GM23248 (cell line): ENCODE measurements at regions of chr19 and their contacts with region 1.

Region 1: GRCh38 chr19:13880059-13881043 is 3.4 kb downstream of the NANOS3 start:
- DNase-seq: peak; percentile 100
- H3K4me3 ChIP-seq: peak overlapping the region; percentile 56
- H3K27ac ChIP-seq: peak overlapping the region; percentile 82
- H3K4me1 ChIP-seq: peaks cover 21% of the 10 kb centered on the region
- H3K27me3 ChIP-seq: no peaks in the 10 kb centered on the region

Region 2: DNA sequence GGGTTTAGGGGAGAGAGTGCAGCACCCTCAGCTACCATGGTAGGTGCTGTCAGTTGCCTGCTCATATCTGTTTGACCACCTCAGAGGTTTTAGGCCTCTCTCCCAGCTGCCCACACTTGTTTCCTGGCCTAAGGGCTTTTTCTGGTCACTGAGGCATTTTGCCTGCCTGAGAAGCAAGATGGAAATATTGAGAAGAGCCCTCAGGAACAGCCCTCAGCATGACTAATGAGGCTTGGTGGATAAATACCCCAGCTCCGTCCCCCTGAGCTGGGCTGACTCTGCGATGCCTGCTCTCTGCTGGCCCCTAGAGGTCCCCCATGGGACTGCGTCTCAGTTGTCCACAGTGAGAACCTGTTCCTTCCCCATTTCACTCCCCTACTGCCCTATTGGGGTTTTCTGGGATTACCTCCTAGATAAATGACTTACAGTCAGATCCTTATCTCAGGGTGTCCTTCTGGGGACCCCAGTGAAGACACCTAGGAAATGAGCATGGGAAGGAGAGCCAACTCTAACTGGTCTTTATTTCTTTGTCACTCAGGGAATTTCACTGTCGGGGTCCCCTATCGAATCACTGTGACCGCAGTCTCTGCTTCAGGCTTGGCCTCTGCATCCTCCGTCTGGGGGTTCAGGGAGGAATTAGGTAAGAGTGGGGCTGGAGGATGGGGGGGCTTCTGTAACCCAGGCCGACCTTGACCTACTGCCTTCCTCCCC is 168.2 kb after region 1 on chr19:
- in situ Hi-C with region 1: loop called (anchors 10 kb)
- DNase-seq: peak; percentile 48
- H3K4me3 ChIP-seq: no peak overlapping the region
- H3K27ac ChIP-seq: no peak overlapping the region
- H3K4me1 ChIP-seq: no peaks in the 10 kb centered on the region
- H3K27me3 ChIP-seq: no peaks in the 10 kb centered on the region

Region 3: GRCh38 chr19:14073261-14073924 is 193.0 kb after region 1 on chr19:
- in situ Hi-C with region 1: loop called (anchors 10 kb)
- DNase-seq: peak; percentile 92
- H3K4me3 ChIP-seq: peak overlapping the region; percentile 92
- H3K27ac ChIP-seq: peak overlapping the region; percentile 40
- H3K4me1 ChIP-seq: peaks cover 6% of the 10 kb centered on the region
- H3K27me3 ChIP-seq: no peaks in the 10 kb centered on the region

Region 4: GRCh38 chr19:14347999-14348889 is 467.9 kb after region 1 on chr19:
- in situ Hi-C with region 1: loop called (anchors 25 kb)
- DNase-seq: peak; percentile 71
- H3K4me3 ChIP-seq: peak overlapping the region; percentile 60
- H3K27ac ChIP-seq: no peak overlapping the region
- H3K4me1 ChIP-seq: no peaks in the 10 kb centered on the region
- H3K27me3 ChIP-seq: 0 out of 2 replicates have a peak, but pooled peaks cover 21% of the 10 kb centered on the region